OCI-LY7 (cell line): ENCODE measurements at regions of chr14 and their contacts with region 1.

Region 1: DNA sequence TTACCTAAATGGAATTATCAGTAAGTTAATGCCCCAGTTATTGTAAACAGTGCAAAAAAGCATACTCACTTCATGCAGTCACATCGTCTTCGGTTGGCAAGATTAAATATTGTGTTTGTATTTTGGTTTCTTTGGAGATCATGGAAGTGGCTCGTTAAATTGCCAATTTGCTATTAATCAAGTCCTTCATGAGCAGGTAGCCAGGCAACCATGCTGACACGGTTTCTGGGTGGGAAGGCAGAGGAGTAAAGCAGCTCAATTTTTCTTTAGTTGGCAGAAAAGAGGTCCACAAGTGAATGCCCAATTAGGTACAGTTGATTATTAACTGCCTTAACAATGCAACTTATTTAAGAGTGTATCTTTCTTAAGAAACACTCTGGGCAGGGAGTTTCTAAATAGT is 43.9 kb downstream of the PPP4R3A start:
- DNase-seq: no peak
- H3K4me3 ChIP-seq: no peak overlapping the region
- H3K27ac ChIP-seq: no peak overlapping the region
- H3K4me1 ChIP-seq: no peaks in the 10 kb centered on the region
- CTCF ChIP-seq: no peak

Region 2: GRCh38 chr14:91149479-91149921 is 316.7 kb before region 1 on chr14:
- CTCF ChIA-PET with region 1: no interaction called
- POLR2A ChIA-PET with region 1: interaction called, 10 read pairs
- intact Hi-C with region 1: no loop called
- DNase-seq: no peak
- H3K4me3 ChIP-seq: no peak overlapping the region
- H3K27ac ChIP-seq: no peak overlapping the region
- H3K4me1 ChIP-seq: no peaks in the 10 kb centered on the region
- CTCF ChIP-seq: no peak

Region 3: DNA sequence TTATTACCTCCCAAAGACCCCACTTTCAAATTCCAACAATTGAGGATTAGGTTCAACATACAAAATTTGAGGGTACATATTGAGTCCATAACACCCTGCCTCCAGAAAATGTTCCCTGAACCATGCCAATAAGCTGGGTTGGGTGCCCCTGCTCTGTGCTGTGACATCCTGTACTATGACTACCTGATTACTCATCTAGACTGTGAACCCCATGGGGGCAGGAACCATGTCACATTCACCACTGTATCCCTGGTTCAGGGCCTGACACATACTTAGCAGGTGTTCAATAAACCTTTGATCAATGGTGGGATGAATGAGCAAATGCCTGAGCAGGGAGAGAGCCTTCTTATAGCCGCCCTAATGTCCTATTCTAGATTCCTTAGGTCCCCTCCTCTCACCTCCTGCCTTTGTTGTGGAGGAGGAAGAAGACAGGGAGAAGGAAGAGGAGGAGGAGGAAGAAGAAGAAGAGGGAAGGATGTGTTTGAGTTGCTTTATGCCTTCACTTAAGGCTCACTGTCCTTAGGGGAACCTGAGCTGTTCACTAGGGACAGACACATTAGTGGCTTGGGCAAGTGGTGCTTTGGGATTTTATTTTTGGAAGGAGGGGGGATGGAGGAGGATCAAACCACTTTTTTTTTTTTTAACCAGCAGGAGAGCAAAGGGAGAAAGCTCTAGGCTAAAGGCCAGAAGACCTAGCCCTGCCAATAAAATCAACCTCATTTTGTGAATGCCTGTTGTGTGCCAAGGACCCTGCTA is 243.0 kb before region 1 on chr14:
- CTCF ChIA-PET with region 1: no interaction called
- POLR2A ChIA-PET with region 1: no interaction called
- intact Hi-C with region 1: no loop called
- DNase-seq: no peak
- H3K4me3 ChIP-seq: no peak overlapping the region
- H3K27ac ChIP-seq: no peak overlapping the region
- H3K4me1 ChIP-seq: peaks cover 10% of the 10 kb centered on the region
- CTCF ChIP-seq: no peak

Region 4: DNA sequence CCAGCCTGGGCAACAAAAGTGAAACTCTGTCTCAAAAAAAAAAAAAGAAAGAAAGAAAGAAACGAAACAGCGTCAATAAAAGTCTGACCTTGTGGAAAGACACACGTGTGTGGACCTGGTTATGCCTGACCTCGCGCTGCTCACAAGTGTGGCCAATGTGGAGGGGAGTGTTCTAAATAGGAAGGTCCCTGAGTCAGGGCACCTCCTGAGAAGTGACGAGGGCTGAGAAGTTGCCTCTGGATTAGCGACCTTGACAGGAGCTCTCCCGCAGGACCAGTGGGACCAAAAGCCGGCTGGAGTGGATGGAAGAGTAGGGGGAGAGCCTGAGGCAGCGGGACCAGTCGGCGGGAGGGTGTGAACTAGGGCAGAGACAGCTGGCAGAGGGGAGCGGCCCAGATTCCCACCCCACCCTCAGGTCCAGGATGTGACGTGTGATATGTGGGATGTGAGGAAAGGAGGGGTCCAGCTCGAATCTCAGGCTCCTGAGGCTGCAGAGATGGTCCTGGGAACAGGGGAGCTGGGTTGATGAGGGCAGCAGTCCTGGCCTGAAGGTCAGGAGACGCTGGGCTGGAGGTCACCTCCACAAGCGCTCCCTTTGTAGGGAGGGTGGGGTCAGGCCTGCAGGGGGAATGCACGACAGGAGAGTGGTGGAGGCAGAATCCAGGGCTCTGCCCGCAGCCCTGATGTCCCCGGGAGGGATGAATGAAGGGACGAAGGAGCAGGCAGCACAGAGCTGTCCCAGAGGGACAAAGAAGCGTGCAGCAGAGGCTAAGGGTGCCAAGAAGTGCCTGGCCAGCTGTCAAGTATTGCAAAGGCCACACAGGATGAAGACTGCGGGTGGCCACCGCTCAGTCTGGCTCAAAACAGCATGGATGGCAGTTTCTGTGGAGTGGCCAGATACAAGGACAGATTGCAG is 196.9 kb before region 1 on chr14:
- CTCF ChIA-PET with region 1: no interaction called
- POLR2A ChIA-PET with region 1: no interaction called
- intact Hi-C with region 1: no loop called
- DNase-seq: no peak
- H3K4me3 ChIP-seq: no peak overlapping the region
- H3K27ac ChIP-seq: no peak overlapping the region
- H3K4me1 ChIP-seq: no peaks in the 10 kb centered on the region
- CTCF ChIP-seq: no peak

Region 5: GRCh38 chr14:91523972-91524371 is 57.8 kb after region 1 on chr14:
- CTCF ChIA-PET with region 1: no interaction called
- POLR2A ChIA-PET with region 1: no interaction called
- intact Hi-C with region 1: no loop called
- DNase-seq: no peak
- H3K4me3 ChIP-seq: no peak overlapping the region
- H3K27ac ChIP-seq: no peak overlapping the region
- H3K4me1 ChIP-seq: no peaks in the 10 kb centered on the region
- CTCF ChIP-seq: peak; percentile 34; the same call in 1 of the 2 replicates